ENCODE measurements at regions of chr2 and their contacts with region 1.

Region 1: GRCh38 chr2:191078165-191078867 is 64.3 kb upstream of the STAT1 start:
- DNase-seq: no peak
- H3K4me3 Mint-ChIP-seq: peak overlapping the region; percentile 79
- H3K27ac Mint-ChIP-seq: peak overlapping the region; percentile 90
- H3K4me1 Mint-ChIP-seq: peaks cover 27% of the 10 kb centered on the region
- H3K27me3 Mint-ChIP-seq: no peaks in the 10 kb centered on the region

Region 2: GRCh38 chr2:191001032-191001431 is 77.3 kb before region 1 on chr2:
- intact Hi-C with region 1: no loop called
- DNase-seq: no peak
- H3K4me3 Mint-ChIP-seq: peak overlapping the region; percentile 13
- H3K27ac Mint-ChIP-seq: peak overlapping the region; percentile 77
- H3K4me1 Mint-ChIP-seq: peaks cover 79% of the 10 kb centered on the region
- H3K27me3 Mint-ChIP-seq: no peaks in the 10 kb centered on the region

Region 3: DNA sequence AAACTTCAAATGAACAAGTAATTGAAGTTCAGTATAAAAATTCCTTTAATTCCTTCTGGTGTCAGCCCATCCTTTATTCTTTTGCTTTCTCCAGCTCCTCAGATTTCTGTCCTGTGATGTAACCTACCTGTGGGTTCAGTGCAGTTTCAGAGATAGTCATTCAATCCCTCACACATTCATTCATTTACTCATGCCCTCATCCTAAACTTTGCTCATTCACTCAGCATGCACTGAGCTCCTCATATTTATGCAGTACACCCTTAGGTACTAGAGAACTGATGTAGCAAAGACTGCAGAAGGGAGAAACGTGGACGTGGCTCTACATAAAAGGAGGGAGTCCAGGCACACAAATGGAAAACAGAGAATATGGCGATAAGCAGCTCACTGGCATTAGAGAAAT is 19.0 kb before region 1 on chr2:
- intact Hi-C with region 1: loop called (anchors 1 kb)
- DNase-seq: peak; percentile 51
- H3K4me3 Mint-ChIP-seq: no peak overlapping the region
- H3K27ac Mint-ChIP-seq: peak overlapping the region; percentile 7
- H3K4me1 Mint-ChIP-seq: peaks cover 53% of the 10 kb centered on the region
- H3K27me3 Mint-ChIP-seq: no peaks in the 10 kb centered on the region

Region 4: GRCh38 chr2:191066197-191066918 is 12.0 kb before region 1 on chr2:
- intact Hi-C with region 1: loop called (anchors 1 kb)
- DNase-seq: peak; percentile 75
- H3K4me3 Mint-ChIP-seq: peak overlapping the region; percentile 88
- H3K27ac Mint-ChIP-seq: peak overlapping the region; percentile 92
- H3K4me1 Mint-ChIP-seq: peaks cover 76% of the 10 kb centered on the region
- H3K27me3 Mint-ChIP-seq: no peaks in the 10 kb centered on the region

Region 5: GRCh38 chr2:191103774-191104173 is 25.5 kb after region 1 on chr2:
- intact Hi-C with region 1: loop called (anchors 1 kb)
- DNase-seq: no peak
- H3K4me3 Mint-ChIP-seq: no peak overlapping the region
- H3K27ac Mint-ChIP-seq: no peak overlapping the region
- H3K4me1 Mint-ChIP-seq: peaks cover 34% of the 10 kb centered on the region
- H3K27me3 Mint-ChIP-seq: no peaks in the 10 kb centered on the region

Measured in activated CD4-positive, alpha-beta T cell treated with anti-CD3 and anti-CD28 coated beads, Interleukin-2, amount 10 ng/mL, durations not matched to agents 24 days and 14 days (primary cell).